A549 (cell line): ENCODE measurements at regions of chr10 and their contacts with region 1.

Region 1: DNA sequence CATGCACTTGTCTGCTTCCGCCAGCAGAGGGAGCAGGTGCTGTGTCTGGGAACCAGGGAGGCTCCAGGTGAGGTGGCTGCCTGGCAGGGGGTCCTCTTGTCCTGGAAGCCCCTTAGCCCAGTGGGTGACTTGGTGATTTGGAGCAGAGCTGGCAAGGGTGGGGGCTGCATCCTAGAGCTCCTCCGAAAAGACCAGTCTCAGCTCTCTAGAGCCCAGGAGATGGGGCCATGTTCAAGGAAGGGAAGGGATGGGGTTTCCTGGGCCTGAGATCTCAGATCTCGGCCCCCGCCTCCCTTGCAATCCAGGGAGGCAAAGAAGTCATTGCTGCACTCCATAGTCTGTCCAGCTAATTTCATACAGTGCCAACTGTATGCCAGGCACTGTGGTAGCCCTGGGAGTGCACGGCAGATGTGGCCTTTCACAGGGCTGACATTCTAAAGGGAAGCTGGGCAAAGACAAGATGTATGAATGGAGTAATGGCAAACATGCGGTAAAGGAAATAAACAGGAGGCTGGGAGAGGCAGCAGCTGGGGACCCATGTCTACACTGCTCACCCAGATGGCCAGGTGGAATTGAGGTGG is 20.4 kb upstream of the SFRP5 start:
- DNase-seq: peak; percentile 64 to 79
- ATAC-seq: peak; percentile 37 to 49; a peak in 3 of 6 replicates
- H3K4me3 ChIP-seq: no peak overlapping the region
- H3K27ac ChIP-seq: peak overlapping the region; percentile 40 to 66; a peak in 3 of 6 replicates
- H3K4me1 ChIP-seq: no peaks in the 10 kb centered on the region
- CTCF ChIP-seq: peak; percentile 93
- EP300 ChIP-seq: no peak
- POLR2A ChIP-seq: no peak
- RAD21 ChIP-seq: peak; percentile 95 to 96

Region 2: GRCh38 chr10:97659589-97659988 is 132.6 kb before region 1 on chr10:
- CTCF ChIA-PET with region 1: no interaction called
- POLR2A ChIA-PET with region 1: no interaction called
- DNase-seq: no peak
- ATAC-seq: no peak
- H3K4me3 ChIP-seq: no peak overlapping the region
- H3K27ac ChIP-seq: no peak overlapping the region
- H3K4me1 ChIP-seq: no peaks in the 10 kb centered on the region
- CTCF ChIP-seq: no peak
- EP300 ChIP-seq: no peak
- POLR2A ChIP-seq: no peak
- RAD21 ChIP-seq: no peak

Region 3: GRCh38 chr10:97752956-97753355 is 39.3 kb before region 1 on chr10:
- CTCF ChIA-PET with region 1: interaction called, 19 read pairs
- POLR2A ChIA-PET with region 1: no interaction called
- DNase-seq: no peak
- ATAC-seq: no peak
- H3K4me3 ChIP-seq: no peak overlapping the region
- H3K27ac ChIP-seq: no peak overlapping the region
- H3K4me1 ChIP-seq: no peaks in the 10 kb centered on the region
- CTCF ChIP-seq: no peak
- EP300 ChIP-seq: no peak
- POLR2A ChIP-seq: no peak
- RAD21 ChIP-seq: no peak

Region 4: GRCh38 chr10:97780841-97781617 is 11.2 kb before region 1 on chr10:
- CTCF ChIA-PET with region 1: interaction called, 82 read pairs
- POLR2A ChIA-PET with region 1: no interaction called
- DNase-seq: no peak
- ATAC-seq: peak; percentile 45 to 57; a peak in 4 of 6 replicates
- H3K4me3 ChIP-seq: no peak overlapping the region
- H3K27ac ChIP-seq: peak overlapping the region in 1 of 2 experiments; percentile 27; a peak in 1 of 6 replicates
- H3K4me1 ChIP-seq: no peaks in the 10 kb centered on the region
- CTCF ChIP-seq: no peak
- EP300 ChIP-seq: no peak
- POLR2A ChIP-seq: no peak
- RAD21 ChIP-seq: no peak

Region 5: GRCh38 chr10:97822261-97822687 is 30.0 kb after region 1 on chr10:
- CTCF ChIA-PET with region 1: interaction called, 29 read pairs
- POLR2A ChIA-PET with region 1: no interaction called
- DNase-seq: no peak
- ATAC-seq: peak; percentile 35 to 59; a peak in 5 of 6 replicates
- H3K4me3 ChIP-seq: no peak overlapping the region
- H3K27ac ChIP-seq: peak overlapping the region; percentile 31 to 68; a peak in 4 of 6 replicates
- H3K4me1 ChIP-seq: peaks cover 16% of the 10 kb centered on the region
- CTCF ChIP-seq: no peak
- EP300 ChIP-seq: no peak
- POLR2A ChIP-seq: no peak
- RAD21 ChIP-seq: no peak

Region 6: GRCh38 chr10:97849687-97850402 is 57.6 kb after region 1 on chr10 and contains the start of gene GOLGA7B:
- CTCF ChIA-PET with region 1: interaction called, 62 read pairs
- POLR2A ChIA-PET with region 1: no interaction called
- DNase-seq: peak in 1 of 2 experiments; percentile 60
- ATAC-seq: peak; percentile 84 to 86
- H3K4me3 ChIP-seq: peak within 1 kb of the TSS; percentile 84
- H3K27ac ChIP-seq: peak within 1 kb of the TSS; percentile 76 to 83
- H3K4me1 ChIP-seq: peaks cover 6% of the 10 kb centered on the region; the same call in 2 of the 3 replicates
- CTCF ChIP-seq: no peak
- EP300 ChIP-seq: no peak
- POLR2A ChIP-seq: no peak
- RAD21 ChIP-seq: no peak
- polyA plus RNA-seq, gene GOLGA7B: 0.62 and 1.1 TPM in 2 replicates

Region 7: DNA sequence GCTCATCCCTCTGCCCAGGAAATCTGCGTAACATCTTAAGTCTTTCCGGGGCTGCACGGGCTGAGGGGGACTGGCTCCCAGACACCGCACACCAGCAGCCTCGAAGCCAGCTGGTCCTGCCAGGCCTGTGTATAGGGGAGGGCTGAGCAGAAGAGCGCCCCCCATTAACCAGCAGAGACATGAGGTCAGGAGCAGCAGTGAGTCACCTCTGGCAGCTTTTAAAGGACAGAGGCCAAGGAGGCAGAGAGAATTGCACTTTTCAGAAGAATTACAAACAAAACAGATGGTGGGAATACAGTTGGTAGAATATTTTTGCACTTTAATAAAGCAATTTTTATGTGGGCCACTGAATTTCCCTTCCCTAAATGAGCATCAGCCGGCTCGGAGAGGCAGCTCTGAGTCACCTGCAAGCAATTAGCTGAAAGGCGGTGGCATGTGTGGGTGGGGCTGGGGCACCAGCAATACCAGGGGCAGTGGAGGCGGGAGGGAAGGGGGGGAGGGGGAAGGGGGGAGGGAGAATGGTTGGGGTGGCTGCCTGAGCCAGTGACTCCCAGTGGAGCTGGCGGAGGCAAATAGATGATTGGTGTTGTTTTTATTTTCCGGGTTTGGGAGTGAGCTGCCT is 96.5 kb after region 1 on chr10:
- CTCF ChIA-PET with region 1: interaction called, 15 read pairs
- POLR2A ChIA-PET with region 1: no interaction called
- DNase-seq: peak; percentile 74 to 86
- ATAC-seq: peak; percentile 66 to 70
- H3K4me3 ChIP-seq: peak overlapping the region; percentile 25; the same call in 2 of the 3 replicates
- H3K27ac ChIP-seq: peak overlapping the region; percentile 95 to 97
- H3K4me1 ChIP-seq: peaks cover 43% of the 10 kb centered on the region
- CTCF ChIP-seq: peak; percentile 47
- EP300 ChIP-seq: peak in 1 of 2 experiments; percentile 27; a peak in 1 of 5 replicates
- POLR2A ChIP-seq: no peak
- RAD21 ChIP-seq: no peak

Region 8: GRCh38 chr10:98045785-98046389 is 253.7 kb after region 1 on chr10:
- CTCF ChIA-PET with region 1: interaction called, 49 read pairs
- POLR2A ChIA-PET with region 1: no interaction called
- DNase-seq: peak; percentile 74 to 76
- ATAC-seq: peak; percentile 55 to 88; a peak in 5 of 6 replicates
- H3K4me3 ChIP-seq: no peak overlapping the region
- H3K27ac ChIP-seq: no peak overlapping the region
- H3K4me1 ChIP-seq: no peaks in the 10 kb centered on the region
- CTCF ChIP-seq: peak; percentile 82
- EP300 ChIP-seq: no peak
- POLR2A ChIP-seq: no peak
- RAD21 ChIP-seq: peak; percentile 56 to 66; a peak in 4 of 5 replicates